ENCODE measurements at regions of chr19 and their contacts with region 1.

Region 1: GRCh38 chr19:33778089-33778791 is 18.4 kb upstream of the KCTD15 start:
- DNase-seq: peak; percentile 79 to 80 (median 80)
- H3K4me3 ChIP-seq: no peak overlapping the region
- H3K4me3 Mint-ChIP-seq: peak overlapping the region in 1 of 2 donors; percentile 72
- H3K27ac ChIP-seq: no peak overlapping the region
- H3K27ac Mint-ChIP-seq: no peak overlapping the region
- H3K4me1 ChIP-seq: no peaks in the 10 kb centered on the region
- H3K4me1 Mint-ChIP-seq: peaks cover 3% of the 10 kb centered on the region
- H3K27me3 ChIP-seq: peaks cover 0 to 11% of the 10 kb centered on the region in 2 donors
- H3K27me3 Mint-ChIP-seq: peaks cover 18 to 20% (median 19%) of the 10 kb centered on the region in 3 donors
- CTCF ChIP-seq: peak; percentile 100

Region 2: GRCh38 chr19:33125929-33126388 is 652.3 kb before region 1 on chr19:
- intact Hi-C with region 1: loop called (anchors 5 to 10 kb)
- DNase-seq: peak; percentile 37 to 51 (median 51)
- H3K4me3 ChIP-seq: no peak overlapping the region
- H3K4me3 Mint-ChIP-seq: no peak overlapping the region
- H3K27ac ChIP-seq: no peak overlapping the region
- H3K27ac Mint-ChIP-seq: peak overlapping the region in 1 of 7 donors; percentile 32
- H3K4me1 ChIP-seq: peaks cover 3 to 4% of the 10 kb centered on the region in 2 donors
- H3K4me1 Mint-ChIP-seq: peaks cover 3% of the 10 kb centered on the region
- H3K27me3 ChIP-seq: no peaks in the 10 kb centered on the region
- H3K27me3 Mint-ChIP-seq: no peaks in the 10 kb centered on the region
- CTCF ChIP-seq: peak; percentile 81

Region 3: GRCh38 chr19:33887891-33888290 is 109.7 kb after region 1 on chr19:
- intact Hi-C with region 1: no loop called
- DNase-seq: no peak
- H3K4me3 ChIP-seq: no peak overlapping the region
- H3K4me3 Mint-ChIP-seq: no peak overlapping the region
- H3K27ac ChIP-seq: no peak overlapping the region
- H3K27ac Mint-ChIP-seq: no peak overlapping the region
- H3K4me1 ChIP-seq: no peaks in the 10 kb centered on the region
- H3K4me1 Mint-ChIP-seq: peaks cover 2% of the 10 kb centered on the region
- H3K27me3 ChIP-seq: peaks cover 0 to 12% of the 10 kb centered on the region in 2 donors
- H3K27me3 Mint-ChIP-seq: peaks cover 17 to 18% (median 18%) of the 10 kb centered on the region in 3 donors
- CTCF ChIP-seq: no peak

Region 4: GRCh38 chr19:33998739-33999345 is 220.6 kb after region 1 on chr19:
- intact Hi-C with region 1: loop called (anchors 2 to 5 kb)
- DNase-seq: peak in 1 of 3 donors; percentile 19
- H3K4me3 ChIP-seq: no peak overlapping the region
- H3K4me3 Mint-ChIP-seq: no peak overlapping the region
- H3K27ac ChIP-seq: no peak overlapping the region
- H3K27ac Mint-ChIP-seq: no peak overlapping the region
- H3K4me1 ChIP-seq: no peaks in the 10 kb centered on the region
- H3K4me1 Mint-ChIP-seq: no peaks in the 10 kb centered on the region
- H3K27me3 ChIP-seq: no peaks in the 10 kb centered on the region
- H3K27me3 Mint-ChIP-seq: peaks cover 0 to 7% (median 6%) of the 10 kb centered on the region in 3 donors
- CTCF ChIP-seq: peak; percentile 53

Region 5: DNA sequence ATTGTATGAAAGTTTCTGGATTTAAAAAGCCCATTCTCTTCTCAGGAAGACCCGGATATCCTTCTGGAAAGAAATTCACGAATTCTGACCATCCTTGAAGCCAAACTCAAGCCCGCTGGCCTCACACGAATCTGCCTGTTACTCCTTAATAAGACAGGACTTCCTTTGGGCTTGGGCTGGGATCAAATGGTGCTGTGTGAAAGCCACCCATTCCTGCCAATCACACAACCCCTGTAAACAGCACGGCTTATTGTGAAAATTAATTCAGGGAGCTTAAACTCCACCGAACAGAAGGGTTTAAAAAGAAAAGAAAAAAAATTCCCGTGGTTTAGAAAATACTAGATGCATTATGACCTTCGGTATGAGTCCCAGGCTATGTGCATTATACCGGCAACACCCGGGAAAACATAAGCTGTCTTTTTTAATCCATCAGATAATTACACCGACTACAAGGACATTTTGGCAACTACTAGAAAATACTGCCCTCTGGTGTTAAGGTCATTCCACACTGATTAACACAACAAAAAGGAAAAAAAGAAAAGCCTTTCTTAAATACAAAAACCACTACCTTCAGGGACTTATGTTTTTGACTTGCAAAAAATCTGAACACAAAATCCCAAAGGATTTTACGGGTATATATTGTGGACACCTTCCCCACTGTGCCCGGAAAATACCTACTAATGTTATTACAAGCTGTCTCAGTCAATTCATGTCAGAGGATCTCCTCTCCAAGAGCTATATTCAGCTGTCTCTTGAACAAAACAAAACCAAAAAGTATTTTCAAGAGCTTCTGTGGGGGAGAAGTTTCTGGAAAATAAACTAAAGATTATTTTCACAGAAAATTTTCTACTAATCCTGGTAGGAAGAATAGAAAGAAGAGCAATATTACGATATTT is 318.0 kb after region 1 on chr19:
- intact Hi-C with region 1: loop called (anchors 1 to 5 kb)
- DNase-seq: peak; percentile 9 to 42 (median 20)
- H3K4me3 ChIP-seq: no peak overlapping the region
- H3K4me3 Mint-ChIP-seq: peak overlapping the region in 1 of 2 donors; percentile 44
- H3K27ac ChIP-seq: no peak overlapping the region
- H3K27ac Mint-ChIP-seq: no peak overlapping the region
- H3K4me1 ChIP-seq: no peaks in the 10 kb centered on the region
- H3K4me1 Mint-ChIP-seq: no peaks in the 10 kb centered on the region
- H3K27me3 ChIP-seq: no peaks in the 10 kb centered on the region
- H3K27me3 Mint-ChIP-seq: peaks cover 7 to 16% (median 9%) of the 10 kb centered on the region in 3 donors
- CTCF ChIP-seq: peak; percentile 65

Region 6: GRCh38 chr19:34120846-34121639 is 342.8 kb after region 1 on chr19:
- intact Hi-C with region 1: no loop called
- DNase-seq: peak; percentile 7 to 18 (median 7)
- H3K4me3 ChIP-seq: no peak overlapping the region
- H3K4me3 Mint-ChIP-seq: no peak overlapping the region
- H3K27ac ChIP-seq: no peak overlapping the region
- H3K27ac Mint-ChIP-seq: no peak overlapping the region
- H3K4me1 ChIP-seq: no peaks in the 10 kb centered on the region
- H3K4me1 Mint-ChIP-seq: no peaks in the 10 kb centered on the region
- H3K27me3 ChIP-seq: no peaks in the 10 kb centered on the region
- H3K27me3 Mint-ChIP-seq: peaks cover 13 to 16% (median 16%) of the 10 kb centered on the region in 3 donors
- CTCF ChIP-seq: peak; percentile 71

Region 7: GRCh38 chr19:34145741-34146202 is 367.5 kb after region 1 on chr19:
- intact Hi-C with region 1: loop called in 1 of 2 experiments (anchors 10 kb)
- DNase-seq: peak; percentile 36 to 51 (median 49)
- H3K4me3 ChIP-seq: no peak overlapping the region
- H3K4me3 Mint-ChIP-seq: no peak overlapping the region
- H3K27ac ChIP-seq: no peak overlapping the region
- H3K27ac Mint-ChIP-seq: no peak overlapping the region
- H3K4me1 ChIP-seq: no peaks in the 10 kb centered on the region
- H3K4me1 Mint-ChIP-seq: no peaks in the 10 kb centered on the region
- H3K27me3 ChIP-seq: no peaks in the 10 kb centered on the region
- H3K27me3 Mint-ChIP-seq: peaks cover 0 to 7% (median 1%) of the 10 kb centered on the region in 3 donors
- CTCF ChIP-seq: peak; percentile 79